CD8-positive, alpha-beta T cell (primary cell): ENCODE measurements at regions of chr2 and their contacts with region 1.

Region 1: DNA sequence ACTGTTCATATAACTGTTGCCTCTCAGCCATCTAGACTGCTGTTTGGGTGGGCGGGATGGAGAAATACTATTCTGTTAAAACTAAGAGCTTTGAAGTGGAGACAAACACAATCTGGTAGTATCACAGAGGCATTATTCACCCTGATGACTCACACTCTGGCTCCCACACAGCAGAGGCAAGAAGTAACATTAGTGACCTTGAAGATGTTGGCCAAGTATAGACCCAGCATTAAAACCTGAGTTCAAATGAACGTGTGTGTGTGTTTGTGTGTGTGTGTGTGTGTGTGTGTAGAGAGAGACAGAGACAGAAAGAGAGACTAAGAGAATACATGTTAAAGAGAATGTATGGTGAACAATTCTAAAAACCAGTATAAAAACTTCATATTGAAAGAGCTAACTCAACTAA is 22.5 kb upstream of the ACVR1 start:
- DNase-seq: peak in 8 of 9 experiments; percentile 26 to 68 (median 52)
- ATAC-seq: peak; percentile 74
- H3K4me3 ChIP-seq: no peak overlapping the region
- H3K4me3 Mint-ChIP-seq: peak overlapping the region; percentile 84
- H3K27ac ChIP-seq: peak overlapping the region in 1 of 2 experiments; percentile 67
- H3K27ac Mint-ChIP-seq: peak overlapping the region; percentile 99
- H3K4me1 ChIP-seq: peaks cover 53% of the 10 kb centered on the region
- H3K4me1 Mint-ChIP-seq: peaks cover 66% of the 10 kb centered on the region
- H3K27me3 ChIP-seq: no peaks in the 10 kb centered on the region
- H3K27me3 Mint-ChIP-seq: no peaks in the 10 kb centered on the region
- CTCF ChIP-seq: no peak

Region 2: DNA sequence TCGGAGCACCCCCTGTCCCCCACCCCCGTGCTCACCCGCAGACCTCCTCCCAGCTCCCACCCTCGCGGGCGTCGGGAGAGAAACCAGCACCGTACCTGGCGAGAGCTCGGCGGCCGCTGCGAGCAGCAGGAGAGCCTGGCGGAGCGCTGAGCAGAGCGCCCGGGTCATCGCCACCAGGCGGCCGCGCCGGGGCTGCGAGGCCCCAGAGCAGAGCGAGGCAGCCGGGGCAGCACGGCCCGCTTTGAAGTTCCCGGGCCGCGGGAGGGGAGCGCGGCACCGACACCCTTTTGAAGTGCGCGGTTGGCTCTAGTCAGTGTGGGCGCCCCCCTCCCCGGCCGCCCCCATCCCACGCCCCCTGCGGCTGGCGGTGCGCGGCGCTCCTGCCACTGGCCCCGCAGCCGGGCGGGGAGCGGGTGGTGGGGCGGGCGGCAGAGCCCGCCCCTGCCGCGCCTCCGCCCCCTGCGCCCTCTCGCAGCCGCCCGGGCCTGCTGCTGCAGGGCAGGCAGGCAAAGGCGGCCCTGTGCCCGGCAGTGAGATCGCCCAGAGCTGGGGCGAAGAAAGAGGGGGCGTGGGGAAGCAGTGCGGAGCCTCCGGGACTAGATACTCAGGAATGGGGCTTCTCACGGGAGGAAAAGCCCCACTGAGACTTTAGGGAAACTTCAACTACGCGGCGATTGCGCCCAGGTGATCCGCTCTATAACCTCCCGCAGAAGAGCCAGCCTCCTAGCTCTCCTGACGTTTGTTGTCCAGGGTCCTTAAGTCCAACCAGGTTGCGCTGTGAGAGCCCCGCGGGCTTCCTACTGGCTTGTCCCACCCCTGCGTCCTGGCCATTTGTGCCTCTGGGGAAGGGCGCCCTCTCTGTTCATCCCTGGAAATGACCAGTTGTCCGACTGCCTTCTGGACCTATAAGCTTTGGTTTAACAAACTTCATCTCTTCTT is 269.8 kb before region 1 on chr2 and contains the start of gene ACVR1C:
- CTCF ChIA-PET with region 1: interaction called, 3 read pairs
- POLR2A ChIA-PET with region 1: no interaction called
- intact Hi-C with region 1: loop called in 1 of 2 experiments (anchors 5 kb)
- DNase-seq: peak; percentile 32 to 89 (median 62)
- ATAC-seq: peak; percentile 81
- H3K4me3 ChIP-seq: peak within 1 kb of the TSS; percentile 65 to 81
- H3K4me3 Mint-ChIP-seq: peak within 1 kb of the TSS; percentile 96
- H3K27ac ChIP-seq: peak within 1 kb of the TSS in 1 of 2 experiments; percentile 42
- H3K27ac Mint-ChIP-seq: peak within 1 kb of the TSS; percentile 76
- H3K4me1 ChIP-seq: peaks cover 29% of the 10 kb centered on the region
- H3K4me1 Mint-ChIP-seq: peaks cover 37% of the 10 kb centered on the region
- H3K27me3 ChIP-seq: no peaks in the 10 kb centered on the region
- H3K27me3 Mint-ChIP-seq: no peaks in the 10 kb centered on the region
- CTCF ChIP-seq: peak; percentile 26
- total RNA-seq, gene ACVR1C: 2.3 to 2.4 TPM

Region 3: GRCh38 chr2:157838442-157839161 is 60.0 kb before region 1 on chr2:
- CTCF ChIA-PET with region 1: no interaction called
- POLR2A ChIA-PET with region 1: no interaction called
- intact Hi-C with region 1: loop called in 1 of 2 experiments (anchors 5 kb)
- DNase-seq: peak in 1 of 9 experiments; percentile 7
- ATAC-seq: no peak
- H3K4me3 ChIP-seq: no peak overlapping the region
- H3K4me3 Mint-ChIP-seq: no peak overlapping the region
- H3K27ac ChIP-seq: no peak overlapping the region
- H3K27ac Mint-ChIP-seq: peak overlapping the region; percentile 55
- H3K4me1 ChIP-seq: peaks cover 18% of the 10 kb centered on the region
- H3K4me1 Mint-ChIP-seq: peaks cover 39% of the 10 kb centered on the region
- H3K27me3 ChIP-seq: no peaks in the 10 kb centered on the region
- H3K27me3 Mint-ChIP-seq: no peaks in the 10 kb centered on the region
- CTCF ChIP-seq: no peak

Region 4: GRCh38 chr2:157866202-157866601 is 32.4 kb before region 1 on chr2:
- CTCF ChIA-PET with region 1: interaction called, 3 read pairs
- POLR2A ChIA-PET with region 1: interaction called, 3 read pairs
- intact Hi-C with region 1: loop called in 1 of 2 experiments (anchors 5 kb)
- DNase-seq: no peak
- ATAC-seq: no peak
- H3K4me3 ChIP-seq: no peak overlapping the region
- H3K4me3 Mint-ChIP-seq: no peak overlapping the region
- H3K27ac ChIP-seq: no peak overlapping the region
- H3K27ac Mint-ChIP-seq: no peak overlapping the region
- H3K4me1 ChIP-seq: no peaks in the 10 kb centered on the region
- H3K4me1 Mint-ChIP-seq: peaks cover 37% of the 10 kb centered on the region
- H3K27me3 ChIP-seq: no peaks in the 10 kb centered on the region
- H3K27me3 Mint-ChIP-seq: no peaks in the 10 kb centered on the region
- CTCF ChIP-seq: no peak

Region 5: GRCh38 chr2:157876066-157876787 is 22.4 kb before region 1 on chr2 and contains the start of gene ACVR1:
- CTCF ChIA-PET with region 1: interaction called, 45 read pairs
- POLR2A ChIA-PET with region 1: interaction called, 18 read pairs
- intact Hi-C with region 1: loop called (anchors 1 to 2 kb)
- DNase-seq: peak; percentile 37 to 92 (median 78)
- ATAC-seq: peak; percentile 72
- H3K4me3 ChIP-seq: peak within 1 kb of the TSS; percentile 53 to 74
- H3K4me3 Mint-ChIP-seq: peak within 1 kb of the TSS; percentile 94
- H3K27ac ChIP-seq: peak within 1 kb of the TSS; percentile 1 to 29
- H3K27ac Mint-ChIP-seq: peak within 1 kb of the TSS; percentile 90
- H3K4me1 ChIP-seq: peaks cover 10% of the 10 kb centered on the region
- H3K4me1 Mint-ChIP-seq: peaks cover 48% of the 10 kb centered on the region
- H3K27me3 ChIP-seq: no peaks in the 10 kb centered on the region
- H3K27me3 Mint-ChIP-seq: no peaks in the 10 kb centered on the region
- CTCF ChIP-seq: peak; percentile 27
- total RNA-seq, gene ACVR1: 7.0 to 8.3 TPM

Region 6: DNA sequence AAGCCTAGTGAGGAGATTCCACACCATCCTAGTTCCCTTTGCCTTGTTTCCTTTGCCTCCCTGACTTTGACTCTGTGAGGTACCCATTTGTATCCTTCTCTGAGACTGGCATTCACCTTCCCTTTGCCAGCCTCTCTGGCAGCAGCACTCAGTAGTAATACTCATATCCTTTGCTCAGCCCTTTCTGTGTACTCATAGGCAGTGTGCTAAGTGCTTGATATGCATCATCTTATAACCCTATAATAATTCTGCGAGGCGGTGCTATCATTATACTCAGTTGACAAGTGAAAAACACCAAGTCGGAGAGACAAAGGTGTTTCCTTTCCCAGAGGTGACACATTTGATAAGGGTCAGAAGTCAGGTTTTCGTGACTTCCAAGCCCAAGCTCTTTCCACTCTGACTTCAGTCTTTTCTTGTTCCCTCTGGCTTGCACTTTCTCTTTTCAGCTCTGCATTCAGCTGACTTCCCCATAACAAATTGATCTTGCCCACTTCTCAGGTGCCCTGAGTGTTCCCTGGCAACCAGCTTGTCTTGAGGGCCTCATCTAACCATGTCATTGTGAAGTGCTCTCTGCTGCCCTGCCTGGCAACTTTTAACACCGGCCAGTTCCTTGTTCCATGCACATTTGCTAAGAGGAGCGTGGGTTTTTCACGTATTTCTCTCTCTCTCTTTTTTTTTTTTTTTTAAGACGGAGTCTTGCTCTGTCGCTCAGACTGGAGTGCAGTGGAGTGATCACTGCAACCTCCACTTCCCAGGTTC is 108.5 kb after region 1 on chr2:
- CTCF ChIA-PET with region 1: interaction called, 5 read pairs
- POLR2A ChIA-PET with region 1: no interaction called
- intact Hi-C with region 1: loop called in 1 of 2 experiments (anchors 5 kb)
- DNase-seq: peak in 1 of 9 experiments; percentile 24
- ATAC-seq: peak; percentile 40
- H3K4me3 ChIP-seq: no peak overlapping the region
- H3K4me3 Mint-ChIP-seq: no peak overlapping the region
- H3K27ac ChIP-seq: no peak overlapping the region
- H3K27ac Mint-ChIP-seq: no peak overlapping the region
- H3K4me1 ChIP-seq: no peaks in the 10 kb centered on the region
- H3K4me1 Mint-ChIP-seq: peaks cover 4% of the 10 kb centered on the region
- H3K27me3 ChIP-seq: no peaks in the 10 kb centered on the region
- H3K27me3 Mint-ChIP-seq: peaks cover 11% of the 10 kb centered on the region
- CTCF ChIP-seq: no peak

Region 7: DNA sequence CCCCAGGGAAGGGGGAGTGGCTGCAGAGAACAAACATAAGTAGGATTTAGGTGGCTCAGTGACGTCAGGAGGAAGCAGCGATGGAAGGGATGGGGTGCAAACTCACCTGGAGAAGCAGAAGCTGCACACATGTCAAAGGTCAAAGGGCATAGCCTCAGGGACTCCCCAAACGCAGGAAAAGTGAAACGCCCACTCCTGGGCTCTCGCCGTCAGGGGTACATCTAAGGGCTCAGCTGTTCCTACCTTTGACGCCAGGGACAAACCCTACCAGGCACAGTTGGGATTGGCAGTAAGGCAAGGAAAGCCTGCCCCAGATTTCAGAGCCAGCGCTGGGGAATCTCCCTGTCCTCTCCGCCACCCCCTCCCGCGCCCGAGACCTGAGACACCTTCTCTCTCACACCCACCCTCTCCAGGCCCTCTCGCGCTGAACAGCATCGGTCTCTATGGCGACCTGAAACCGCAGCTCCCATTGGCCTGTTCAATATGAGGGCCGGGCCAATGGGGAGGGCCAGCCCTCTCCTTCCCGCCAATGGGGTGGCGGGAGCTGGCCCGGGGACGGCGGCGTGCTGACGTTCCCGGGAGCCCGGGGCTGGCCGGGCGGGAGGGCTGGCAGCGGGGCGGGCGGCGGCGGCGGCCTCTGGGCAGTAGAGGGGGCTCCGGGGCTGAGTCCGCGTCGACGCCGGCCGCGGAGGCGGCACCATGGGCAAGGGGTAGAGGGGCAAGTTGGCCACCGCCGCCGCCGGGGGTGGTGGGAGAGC is 557.9 kb after region 1 on chr2 and contains the starts of genes CCDC148 and PKP4:
- CTCF ChIA-PET with region 1: no interaction called
- POLR2A ChIA-PET with region 1: no interaction called
- intact Hi-C with region 1: loop called in 1 of 2 experiments (anchors 5 kb)
- DNase-seq: peak; percentile 74 to 97 (median 86)
- ATAC-seq: peak; percentile 91
- H3K4me3 ChIP-seq: peak within 1 kb of the TSS; percentile 69 to 81
- H3K4me3 Mint-ChIP-seq: peak within 1 kb of the TSS; percentile 96
- H3K27ac ChIP-seq: peak within 1 kb of the TSS; percentile 23 to 49
- H3K27ac Mint-ChIP-seq: peak within 1 kb of the TSS; percentile 76
- H3K4me1 ChIP-seq: peaks cover 12% of the 10 kb centered on the region
- H3K4me1 Mint-ChIP-seq: peaks cover 16% of the 10 kb centered on the region
- H3K27me3 ChIP-seq: no peaks in the 10 kb centered on the region
- H3K27me3 Mint-ChIP-seq: peaks cover 13% of the 10 kb centered on the region
- CTCF ChIP-seq: no peak
- total RNA-seq, gene CCDC148: not detected
- total RNA-seq, gene PKP4: 5.7 to 8.1 TPM